Activated naive CD4-positive, alpha-beta T cell treated with anti-CD3 and anti-CD28 coated beads for 36 hours (primary cell): ENCODE measurements at regions of chr14 and their contacts with region 1.

Region 1: DNA sequence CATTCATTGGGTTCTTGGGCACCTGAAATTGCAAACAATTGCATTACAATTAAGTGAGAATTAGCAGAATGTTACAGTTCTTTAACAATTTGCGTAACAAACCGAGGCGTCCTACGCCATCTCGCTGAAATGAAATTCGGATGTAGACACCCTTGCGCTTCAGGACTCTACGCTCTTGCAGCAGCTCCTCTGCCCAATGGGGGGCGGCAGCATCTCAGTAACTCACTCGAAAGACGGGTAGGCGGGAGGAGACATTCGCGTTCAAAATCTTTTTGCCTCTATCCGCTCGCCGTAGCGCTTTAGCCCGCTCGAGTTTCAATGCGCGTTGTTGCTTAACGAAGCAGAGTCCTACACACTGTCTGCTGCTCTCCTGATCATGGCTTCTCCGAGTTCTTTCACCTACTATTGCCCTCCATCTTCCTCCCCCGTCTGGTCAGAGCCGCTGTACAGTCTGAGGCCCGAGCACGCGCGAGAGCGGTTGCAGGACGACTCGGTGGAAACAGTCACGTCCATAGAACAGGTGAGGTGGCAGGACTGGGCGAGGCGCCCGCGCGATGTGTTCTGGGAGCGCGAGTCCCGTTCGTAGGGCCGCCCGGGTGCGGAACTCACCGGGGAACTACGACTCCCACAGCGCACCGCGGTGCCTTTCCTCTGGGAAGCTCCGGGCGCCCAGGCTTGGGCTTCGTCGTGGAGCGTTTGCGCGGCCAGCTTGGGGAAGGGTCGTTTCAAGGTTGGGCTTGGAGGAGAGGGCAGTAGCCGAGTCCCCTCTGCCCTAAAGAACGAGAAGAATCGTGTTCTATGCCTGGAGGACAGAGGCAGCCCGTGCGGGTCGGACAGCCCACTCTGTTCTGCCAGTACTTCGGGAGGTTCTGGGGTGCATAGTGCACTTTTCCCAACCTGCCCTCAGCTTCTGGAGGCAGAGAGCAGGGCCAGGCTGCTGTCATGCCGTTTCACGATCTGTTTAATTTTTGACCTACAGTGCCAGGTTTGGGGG is at the start of gene FNTB:
- DNase-seq: peak; percentile 96
- H3K4me3 Mint-ChIP-seq: peak within 1 kb of the TSS; percentile 93
- H3K27ac Mint-ChIP-seq: peak within 1 kb of the TSS; percentile 96
- H3K4me1 Mint-ChIP-seq: peaks cover 28% of the 10 kb centered on the region
- H3K27me3 Mint-ChIP-seq: no peaks in the 10 kb centered on the region
- total RNA-seq, gene FNTB: 7.9 to 10.0 TPM

Region 2: DNA sequence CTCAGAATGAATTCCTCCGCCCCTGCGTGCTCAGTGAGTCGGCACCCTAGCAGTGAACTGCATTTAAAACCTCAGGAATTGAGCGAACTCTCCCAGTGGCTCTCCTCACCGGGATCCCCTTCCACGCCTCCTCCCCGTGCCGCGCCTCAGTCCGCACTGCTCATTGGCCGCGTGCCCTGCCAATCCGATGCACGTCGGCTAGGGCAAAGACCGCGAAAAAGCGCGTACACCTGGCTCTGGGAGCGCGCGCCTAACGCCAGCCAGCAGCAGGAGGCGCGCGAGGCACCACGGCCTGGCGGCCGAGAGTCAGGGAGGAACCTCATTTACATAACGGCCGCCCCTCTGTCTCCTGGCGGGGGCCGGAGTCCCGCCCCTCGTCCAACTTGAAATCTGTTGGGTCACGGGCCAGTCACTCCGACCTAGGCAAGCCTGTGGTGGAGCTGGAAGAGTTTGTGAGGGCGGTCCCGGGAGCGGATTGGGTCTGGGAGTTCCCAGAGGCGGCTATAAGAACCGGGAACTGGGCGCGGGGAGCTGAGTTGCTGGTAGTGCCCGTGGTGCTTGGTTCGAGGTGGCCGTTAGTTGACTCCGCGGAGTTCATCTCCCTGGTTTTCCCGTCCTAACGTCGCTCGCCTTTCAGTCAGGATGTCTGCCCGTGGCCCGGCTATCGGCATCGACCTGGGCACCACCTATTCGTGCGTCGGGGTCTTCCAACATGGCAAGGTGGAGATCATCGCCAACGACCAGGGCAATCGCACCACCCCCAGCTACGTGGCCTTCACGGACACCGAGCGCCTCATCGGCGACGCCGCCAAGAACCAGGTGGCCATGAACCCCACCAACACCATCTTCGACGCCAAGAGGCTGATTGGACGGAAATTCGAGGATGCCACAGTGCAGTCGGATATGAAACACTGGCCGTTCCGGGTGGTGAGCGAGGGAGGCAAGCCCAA is 446.4 kb before region 1 on chr14 and contains the start of gene HSPA2:
- CTCF ChIA-PET with region 1: no interaction called
- intact Hi-C with region 1: loop called (anchors 10 kb)
- DNase-seq: peak; percentile 97
- H3K4me3 Mint-ChIP-seq: peak within 1 kb of the TSS; percentile 92
- H3K27ac Mint-ChIP-seq: peak within 1 kb of the TSS; percentile 83
- H3K4me1 Mint-ChIP-seq: peaks cover 30% of the 10 kb centered on the region
- H3K27me3 Mint-ChIP-seq: peaks cover 22% of the 10 kb centered on the region
- total RNA-seq, gene HSPA2: 4.1 to 5.1 TPM

Region 3: DNA sequence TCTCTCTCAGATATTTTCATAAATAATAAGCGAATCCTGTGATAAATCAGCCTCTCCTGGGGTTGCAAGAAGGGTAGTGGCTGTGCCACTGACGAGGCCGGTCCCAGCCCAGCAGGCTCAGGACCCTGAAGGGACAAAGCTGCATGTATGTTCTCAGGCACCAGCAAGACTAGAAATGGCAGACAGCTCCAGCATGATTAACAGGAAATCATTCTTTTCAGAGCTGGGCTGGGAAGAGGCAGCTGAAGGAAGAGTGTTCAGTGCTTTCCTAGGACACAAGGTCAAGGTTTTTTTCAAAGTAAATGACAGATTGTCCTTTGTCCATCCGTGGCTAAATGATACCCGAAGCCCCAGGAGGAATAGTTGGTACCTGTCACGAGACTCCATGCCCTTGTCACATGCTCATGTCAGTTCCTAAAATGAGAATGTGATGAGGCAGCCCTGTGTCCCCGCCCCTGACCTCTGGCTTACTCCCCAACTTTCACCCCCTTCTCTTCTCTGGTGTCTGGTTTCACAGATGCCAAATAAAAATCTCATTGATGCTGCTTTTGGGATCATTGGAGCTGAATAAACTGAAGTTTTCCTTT is 372.0 kb before region 1 on chr14:
- CTCF ChIA-PET with region 1: no interaction called
- intact Hi-C with region 1: no loop called
- DNase-seq: no peak
- H3K4me3 Mint-ChIP-seq: no peak overlapping the region
- H3K27ac Mint-ChIP-seq: no peak overlapping the region
- H3K4me1 Mint-ChIP-seq: no peaks in the 10 kb centered on the region
- H3K27me3 Mint-ChIP-seq: no peaks in the 10 kb centered on the region

Region 4: GRCh38 chr14:64800000-64800399 is 186.9 kb before region 1 on chr14:
- CTCF ChIA-PET with region 1: no interaction called
- intact Hi-C with region 1: loop called (anchors 5 kb)
- DNase-seq: no peak
- H3K4me3 Mint-ChIP-seq: no peak overlapping the region
- H3K27ac Mint-ChIP-seq: no peak overlapping the region
- H3K4me1 Mint-ChIP-seq: no peaks in the 10 kb centered on the region
- H3K27me3 Mint-ChIP-seq: no peaks in the 10 kb centered on the region

Region 5: GRCh38 chr14:64841121-64841651 is 145.7 kb before region 1 on chr14:
- CTCF ChIA-PET with region 1: no interaction called
- intact Hi-C with region 1: no loop called
- DNase-seq: no peak
- H3K4me3 Mint-ChIP-seq: no peak overlapping the region
- H3K27ac Mint-ChIP-seq: no peak overlapping the region
- H3K4me1 Mint-ChIP-seq: no peaks in the 10 kb centered on the region
- H3K27me3 Mint-ChIP-seq: peaks cover 24% of the 10 kb centered on the region

Region 6: GRCh38 chr14:64891839-64892375 is 95.0 kb before region 1 on chr14:
- CTCF ChIA-PET with region 1: interaction called, 17 read pairs
- intact Hi-C with region 1: loop called (anchors 5 kb)
- DNase-seq: peak; percentile 49
- H3K4me3 Mint-ChIP-seq: no peak overlapping the region
- H3K27ac Mint-ChIP-seq: no peak overlapping the region
- H3K4me1 Mint-ChIP-seq: no peaks in the 10 kb centered on the region
- H3K27me3 Mint-ChIP-seq: no peaks in the 10 kb centered on the region

Region 7: GRCh38 chr14:65019944-65020566 is 33.2 kb after region 1 on chr14:
- CTCF ChIA-PET with region 1: interaction called, 5 read pairs
- intact Hi-C with region 1: loop called (anchors 1 kb)
- DNase-seq: peak; percentile 11
- H3K4me3 Mint-ChIP-seq: no peak overlapping the region
- H3K27ac Mint-ChIP-seq: no peak overlapping the region
- H3K4me1 Mint-ChIP-seq: no peaks in the 10 kb centered on the region
- H3K27me3 Mint-ChIP-seq: no peaks in the 10 kb centered on the region

Region 8: DNA sequence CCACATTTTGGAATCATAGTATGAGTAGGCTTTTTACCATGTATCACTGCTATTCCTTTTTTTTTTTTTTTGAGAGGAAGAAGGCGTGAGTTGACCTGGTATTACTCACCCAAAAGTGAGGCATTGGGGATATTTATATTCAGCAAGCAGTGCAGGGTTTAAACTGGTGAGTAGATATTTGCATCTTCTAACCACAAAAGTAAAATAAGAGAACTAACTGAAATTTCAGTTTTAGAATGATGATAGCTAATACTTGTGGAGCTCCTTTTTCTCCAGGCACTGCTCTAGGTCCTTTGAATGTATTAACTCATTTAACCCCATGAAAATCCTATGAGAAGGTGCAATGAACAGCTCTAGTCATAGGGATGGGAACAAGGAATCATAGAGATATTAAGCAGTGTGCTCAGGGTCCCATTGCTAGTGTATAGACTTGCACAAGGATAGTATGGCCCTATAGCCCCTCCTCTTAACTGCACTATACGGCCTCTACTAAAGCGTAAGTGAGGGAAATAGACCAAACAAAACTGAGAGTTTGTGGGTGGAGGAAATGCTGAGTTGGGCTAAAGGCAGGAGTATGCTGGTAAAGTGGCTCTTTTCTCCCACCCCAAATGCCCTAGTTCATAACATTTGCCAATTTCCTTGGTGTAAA is 219.7 kb after region 1 on chr14:
- CTCF ChIA-PET with region 1: no interaction called
- intact Hi-C with region 1: loop called (anchors 2 kb)
- DNase-seq: peak; percentile 29
- H3K4me3 Mint-ChIP-seq: peak overlapping the region; percentile 6
- H3K27ac Mint-ChIP-seq: peak overlapping the region; percentile 71
- H3K4me1 Mint-ChIP-seq: peaks cover 62% of the 10 kb centered on the region
- H3K27me3 Mint-ChIP-seq: peaks cover 3% of the 10 kb centered on the region

Region 9: GRCh38 chr14:65958664-65959562 is 972.0 kb after region 1 on chr14:
- CTCF ChIA-PET with region 1: no interaction called
- intact Hi-C with region 1: loop called (anchors 2 kb)
- DNase-seq: no peak
- H3K4me3 Mint-ChIP-seq: no peak overlapping the region
- H3K27ac Mint-ChIP-seq: no peak overlapping the region
- H3K4me1 Mint-ChIP-seq: peaks cover 13% of the 10 kb centered on the region
- H3K27me3 Mint-ChIP-seq: no peaks in the 10 kb centered on the region